Right lobe of liver (tissue), 6 donors: ENCODE measurements at regions of chr19 and their contacts with region 1.

Region 1: DNA sequence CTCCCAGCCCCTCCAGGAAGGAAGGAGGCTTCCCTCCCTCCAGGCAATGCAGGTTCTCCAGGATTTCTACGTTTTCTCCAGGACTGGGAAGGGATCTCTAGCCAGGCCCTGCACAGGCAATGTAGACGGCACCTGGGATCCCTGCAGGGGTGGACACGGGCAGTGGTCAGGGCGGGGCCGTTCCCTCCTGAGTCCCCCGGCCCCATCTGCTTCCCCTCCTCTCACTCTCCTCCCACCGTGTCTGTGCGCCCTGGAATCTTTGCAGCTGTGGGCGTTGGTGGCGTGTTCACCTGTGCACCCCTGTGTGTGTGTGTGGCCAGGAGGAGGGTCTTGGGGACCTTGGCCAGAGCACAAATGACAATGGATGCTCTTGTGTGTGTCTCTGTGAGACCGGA is 10.0 kb downstream of the NRTN start:
- DNase-seq: no peak
- ATAC-seq: peak in 2 of 4 donors; percentile 22 to 36
- H3K4me3 ChIP-seq: no peak overlapping the region
- H3K27ac ChIP-seq: no peak overlapping the region
- H3K4me1 ChIP-seq: no peaks in the 10 kb centered on the region
- H3K27me3 ChIP-seq: no peaks in the 10 kb centered on the region
- CTCF ChIP-seq: no peak
- POLR2A ChIP-seq: no peak

Region 2: GRCh38 chr19:5753743-5754142 is 61.1 kb before region 1 on chr19:
- intact Hi-C with region 1: no loop called
- DNase-seq: no peak
- ATAC-seq: no peak
- H3K4me3 ChIP-seq: no peak overlapping the region
- H3K27ac ChIP-seq: no peak overlapping the region
- H3K4me1 ChIP-seq: no peaks in the 10 kb centered on the region
- H3K27me3 ChIP-seq: no peaks in the 10 kb centered on the region
- CTCF ChIP-seq: no peak
- POLR2A ChIP-seq: no peak

Region 3: GRCh38 chr19:5891938-5892771 is 77.3 kb after region 1 on chr19:
- intact Hi-C with region 1: loop called in 1 of 2 experiments (anchors 5 kb)
- DNase-seq: peak in 1 of 3 donors; percentile 57
- ATAC-seq: peak; percentile 78 to 89 (median 84)
- H3K4me3 ChIP-seq: no peak overlapping the region
- H3K27ac ChIP-seq: no peak overlapping the region
- H3K4me1 ChIP-seq: peaks cover 0 to 8% (median 2%) of the 10 kb centered on the region in 4 donors
- H3K27me3 ChIP-seq: no peaks in the 10 kb centered on the region
- CTCF ChIP-seq: peak; percentile 76 to 88 (median 83)
- POLR2A ChIP-seq: no peak

Region 4: GRCh38 chr19:6038634-6039405 is 224.0 kb after region 1 on chr19:
- intact Hi-C with region 1: no loop called
- DNase-seq: no peak
- ATAC-seq: no peak
- H3K4me3 ChIP-seq: no peak overlapping the region
- H3K27ac ChIP-seq: no peak overlapping the region
- H3K4me1 ChIP-seq: no peaks in the 10 kb centered on the region
- H3K27me3 ChIP-seq: no peaks in the 10 kb centered on the region
- CTCF ChIP-seq: no peak
- POLR2A ChIP-seq: no peak